ENCODE measurements at regions of chr11 and their contacts with region 1.

Region 1: DNA sequence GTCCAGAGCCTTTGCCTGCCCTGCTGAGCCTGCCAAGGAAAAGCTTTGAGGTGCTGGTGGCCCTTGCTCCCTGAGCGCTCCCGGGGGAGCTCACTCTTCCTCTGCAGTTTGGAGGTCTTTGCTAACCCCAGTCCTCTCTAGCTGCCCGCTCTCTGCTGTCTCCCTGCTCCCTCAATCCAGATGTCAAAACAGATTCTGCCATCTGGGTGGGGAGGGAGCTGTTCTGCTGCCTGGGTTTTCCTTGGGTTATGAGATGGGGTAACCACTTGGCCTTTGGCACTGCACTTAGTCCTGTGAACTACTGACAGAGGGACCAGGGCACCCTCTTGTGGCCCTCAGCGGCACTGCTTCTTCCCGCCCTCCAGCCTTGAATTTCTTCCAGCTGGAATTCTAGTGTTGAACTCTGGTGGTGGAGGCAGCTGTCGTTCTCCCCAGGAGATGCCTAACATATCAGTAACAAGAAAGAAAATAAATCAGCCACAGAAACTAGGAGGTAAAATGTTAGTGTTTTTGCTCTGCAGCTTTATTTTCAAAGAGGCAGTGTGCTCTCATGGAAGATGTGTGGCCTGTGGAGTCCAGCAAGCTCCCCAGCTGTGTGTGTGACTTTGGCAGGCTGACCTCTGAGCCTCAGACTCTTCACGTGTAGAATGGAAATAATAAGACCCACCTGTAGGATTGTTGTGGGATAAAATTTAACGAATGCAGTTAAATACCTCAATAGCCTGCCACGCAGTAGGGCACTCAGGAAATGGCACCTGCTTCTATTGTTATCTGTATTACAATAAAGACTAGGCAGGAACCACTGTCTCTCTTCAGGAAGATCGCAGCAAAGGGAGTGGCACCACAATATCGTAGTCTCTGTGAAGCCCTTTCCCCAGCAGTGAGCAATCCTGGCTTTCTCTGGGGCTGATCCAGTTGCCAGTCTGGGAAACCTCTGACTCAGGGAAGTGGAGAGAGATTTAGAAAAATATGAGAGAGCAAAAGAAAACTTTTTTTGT is 23.4 kb downstream of the ARFGAP2 start:
- DNase-seq: peak; percentile 80
- H3K4me3 Mint-ChIP-seq: no peak overlapping the region
- H3K27ac Mint-ChIP-seq: no peak overlapping the region
- H3K4me1 Mint-ChIP-seq: peaks cover 6% of the 10 kb centered on the region
- H3K27me3 Mint-ChIP-seq: no peaks in the 10 kb centered on the region
- CTCF ChIP-seq: peak; percentile 96

Region 2: GRCh38 chr11:46879056-46879585 is 274.1 kb before region 1 on chr11:
- CTCF ChIA-PET with region 1: interaction called, 38 read pairs
- POLR2A ChIA-PET with region 1: interaction called, 3 read pairs
- intact Hi-C with region 1: no loop called
- DNase-seq: no peak
- H3K4me3 Mint-ChIP-seq: no peak overlapping the region
- H3K27ac Mint-ChIP-seq: no peak overlapping the region
- H3K4me1 Mint-ChIP-seq: no peaks in the 10 kb centered on the region
- H3K27me3 Mint-ChIP-seq: no peaks in the 10 kb centered on the region
- CTCF ChIP-seq: no peak

Region 3: DNA sequence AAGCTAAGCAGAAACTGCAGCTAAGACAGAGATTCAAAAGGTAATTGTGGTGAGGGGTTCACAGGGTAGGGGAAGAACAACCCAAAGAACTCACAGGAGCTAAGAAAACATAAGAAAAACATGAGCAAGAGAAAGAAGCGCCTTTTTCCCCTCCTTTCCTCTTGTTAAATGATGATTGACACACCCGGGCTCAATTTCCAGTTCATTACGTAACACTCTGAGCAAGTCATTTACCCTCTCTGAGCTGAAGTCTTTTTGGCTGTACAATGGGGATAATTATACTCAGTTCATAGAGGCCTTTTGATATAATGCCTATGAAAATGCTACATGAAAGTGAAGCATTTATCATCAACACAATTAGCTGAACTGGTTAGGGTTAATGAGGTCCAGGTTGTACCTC is 252.1 kb before region 1 on chr11:
- CTCF ChIA-PET with region 1: interaction called, 99 read pairs
- POLR2A ChIA-PET with region 1: interaction called, 3 read pairs
- intact Hi-C with region 1: no loop called
- DNase-seq: peak; percentile 53
- H3K4me3 Mint-ChIP-seq: no peak overlapping the region
- H3K27ac Mint-ChIP-seq: no peak overlapping the region
- H3K4me1 Mint-ChIP-seq: peaks cover 12% of the 10 kb centered on the region
- H3K27me3 Mint-ChIP-seq: peaks cover 7% of the 10 kb centered on the region
- CTCF ChIP-seq: no peak

Region 4: DNA sequence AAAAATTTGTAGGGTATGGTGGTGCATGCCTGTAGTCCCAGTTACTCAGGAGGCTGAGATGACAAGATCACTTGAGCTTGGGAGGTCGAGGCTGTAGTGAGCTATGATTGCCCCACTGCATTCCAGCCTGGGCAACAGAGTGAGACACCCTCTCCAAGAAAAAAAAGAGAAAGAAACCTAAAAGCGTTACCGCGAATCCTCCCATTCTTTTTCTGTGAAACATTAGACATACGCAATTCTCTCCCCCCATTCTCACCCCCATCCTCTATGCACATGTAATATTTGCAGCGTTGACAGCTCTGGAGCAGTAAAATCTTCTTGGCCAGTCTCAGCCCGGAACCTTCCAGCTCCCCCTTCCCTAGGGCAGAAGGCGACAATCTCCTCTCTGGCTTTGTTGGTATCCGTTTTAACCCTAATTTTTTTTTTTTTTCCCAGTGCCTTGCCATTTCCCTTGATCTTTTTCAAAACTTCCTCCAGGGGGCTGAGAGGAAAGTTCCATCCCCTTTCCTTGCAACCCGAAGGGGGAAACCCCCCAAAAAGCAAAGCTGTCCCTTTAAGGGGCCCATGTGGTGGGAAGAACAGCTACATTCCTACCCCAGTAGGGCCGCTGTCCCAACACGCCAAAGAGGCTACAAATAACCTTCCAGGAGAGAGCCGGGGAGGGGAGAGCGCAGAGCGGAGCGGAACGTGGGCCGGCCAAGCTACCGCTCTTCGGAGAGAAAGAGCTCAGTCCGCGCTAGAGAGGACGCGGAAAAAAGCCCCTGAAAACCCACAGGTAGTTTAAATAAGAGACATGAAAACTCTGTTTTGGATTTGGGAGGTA is 236.8 kb before region 1 on chr11:
- CTCF ChIA-PET with region 1: interaction called, 33 read pairs
- POLR2A ChIA-PET with region 1: interaction called, 11 read pairs
- intact Hi-C with region 1: loop called (anchors 1 kb)
- DNase-seq: peak; percentile 65
- H3K4me3 Mint-ChIP-seq: peak overlapping the region; percentile 75
- H3K27ac Mint-ChIP-seq: peak overlapping the region; percentile 14
- H3K4me1 Mint-ChIP-seq: peaks cover 22% of the 10 kb centered on the region
- H3K27me3 Mint-ChIP-seq: no peaks in the 10 kb centered on the region
- CTCF ChIP-seq: no peak

Region 5: DNA sequence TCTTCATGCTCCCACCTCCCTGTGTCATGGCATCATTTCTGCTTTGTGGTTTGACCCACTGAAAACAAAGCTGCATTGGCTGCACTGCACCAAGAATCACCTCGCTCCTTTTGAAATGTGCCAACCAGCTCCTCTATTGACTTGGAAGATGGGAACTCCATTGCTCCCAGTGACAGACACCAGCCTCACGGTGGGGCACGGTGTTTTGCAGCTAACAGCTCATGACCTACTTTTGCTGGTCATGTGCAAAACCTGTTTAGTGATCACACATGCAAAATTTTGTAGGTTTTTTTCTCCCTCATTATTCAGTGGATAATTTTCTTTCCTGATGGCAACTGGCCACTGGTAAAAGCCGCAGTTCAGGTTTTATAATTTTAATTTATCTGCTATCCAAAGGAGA is 13.4 kb before region 1 on chr11:
- CTCF ChIA-PET with region 1: interaction called, 18 read pairs
- POLR2A ChIA-PET with region 1: no interaction called
- intact Hi-C with region 1: no loop called
- DNase-seq: no peak
- H3K4me3 Mint-ChIP-seq: no peak overlapping the region
- H3K27ac Mint-ChIP-seq: no peak overlapping the region
- H3K4me1 Mint-ChIP-seq: peaks cover 12% of the 10 kb centered on the region
- H3K27me3 Mint-ChIP-seq: no peaks in the 10 kb centered on the region
- CTCF ChIP-seq: no peak

Region 6: GRCh38 chr11:47204637-47204989 is 51.4 kb after region 1 on chr11:
- CTCF ChIA-PET with region 1: no interaction called
- POLR2A ChIA-PET with region 1: no interaction called
- intact Hi-C with region 1: no loop called
- DNase-seq: peak; percentile 75
- H3K4me3 Mint-ChIP-seq: peak overlapping the region; percentile 19
- H3K27ac Mint-ChIP-seq: peak overlapping the region; percentile 78
- H3K4me1 Mint-ChIP-seq: peaks cover 9% of the 10 kb centered on the region
- H3K27me3 Mint-ChIP-seq: no peaks in the 10 kb centered on the region
- CTCF ChIP-seq: no peak

Region 7: GRCh38 chr11:47285969-47286770 is 132.9 kb after region 1 on chr11:
- CTCF ChIA-PET with region 1: no interaction called
- POLR2A ChIA-PET with region 1: no interaction called
- intact Hi-C with region 1: no loop called
- DNase-seq: no peak
- H3K4me3 Mint-ChIP-seq: no peak overlapping the region
- H3K27ac Mint-ChIP-seq: no peak overlapping the region
- H3K4me1 Mint-ChIP-seq: no peaks in the 10 kb centered on the region
- H3K27me3 Mint-ChIP-seq: no peaks in the 10 kb centered on the region
- CTCF ChIP-seq: no peak